ENCODE measurements at regions of chr6 and their contacts with region 1.

Region 1: GRCh38 chr6:8102122-8102958 is at the start of gene EEF1E1:
- DNase-seq: peak; percentile 95

Region 2: GRCh38 chr6:7974938-7975763 is 127.2 kb before region 1 on chr6:
- CTCF ChIA-PET with region 1: no interaction called
- POLR2A ChIA-PET with region 1: no interaction called
- DNase-seq: peak; percentile 27

Region 3: DNA sequence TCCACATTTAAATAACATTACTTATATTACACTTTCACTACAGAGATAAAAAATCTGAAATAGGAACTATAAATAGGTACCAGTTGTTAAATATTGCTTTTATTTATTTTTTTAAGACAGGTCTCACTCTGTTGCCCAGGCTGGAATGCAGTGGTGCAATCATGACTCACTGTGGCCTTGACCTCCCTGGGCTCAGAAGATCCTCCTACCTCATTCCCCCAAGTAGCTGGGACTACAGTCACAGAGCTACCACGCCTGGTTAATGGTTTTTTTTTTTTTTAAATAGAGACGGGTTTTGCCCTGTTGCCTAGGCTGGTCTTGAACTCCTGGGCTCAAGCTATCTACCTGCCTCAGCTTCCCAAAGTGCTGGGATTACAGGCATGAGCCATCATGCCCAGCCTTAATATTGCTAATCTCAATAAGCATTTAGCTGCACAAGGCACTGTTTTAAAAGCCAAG is 17.3 kb before region 1 on chr6:
- CTCF ChIA-PET with region 1: no interaction called
- POLR2A ChIA-PET with region 1: interaction called, 14 read pairs
- DNase-seq: no peak